Activated naive CD4-positive, alpha-beta T cell treated with anti-CD3 and anti-CD28 coated beads for 36 hours (primary cell): ENCODE measurements at regions of chr9 and their contacts with region 1.

Region 1: GRCh38 chr9:72338631-72339030 is 26.4 kb downstream of the ZFAND5 start:
- DNase-seq: no peak
- H3K4me3 Mint-ChIP-seq: no peak overlapping the region
- H3K27ac Mint-ChIP-seq: no peak overlapping the region
- H3K4me1 Mint-ChIP-seq: peaks cover 2% of the 10 kb centered on the region
- H3K27me3 Mint-ChIP-seq: no peaks in the 10 kb centered on the region

Region 2: DNA sequence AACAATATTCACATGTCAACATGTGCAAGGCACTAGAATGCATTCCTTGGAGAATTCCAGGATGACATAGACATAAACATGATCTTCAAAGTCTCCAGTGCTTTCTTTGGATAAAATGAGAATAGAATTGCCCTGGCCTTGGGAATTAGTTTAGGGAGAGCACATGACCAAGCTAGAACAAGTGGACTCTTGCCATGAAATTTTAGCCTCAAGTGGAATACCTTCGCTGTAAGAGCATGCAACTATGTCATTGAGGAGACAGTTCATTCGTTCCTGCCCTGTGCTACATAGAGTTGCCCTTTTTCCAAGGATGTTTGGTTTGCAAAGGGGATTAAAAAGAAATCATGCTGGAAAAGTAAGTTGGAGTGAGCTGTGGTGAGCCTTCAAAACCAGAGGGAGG is 16.4 kb before region 1 on chr9:
- CTCF ChIA-PET with region 1: no interaction called
- intact Hi-C with region 1: loop called (anchors 2 kb)
- DNase-seq: no peak
- H3K4me3 Mint-ChIP-seq: no peak overlapping the region
- H3K27ac Mint-ChIP-seq: no peak overlapping the region
- H3K4me1 Mint-ChIP-seq: no peaks in the 10 kb centered on the region
- H3K27me3 Mint-ChIP-seq: no peaks in the 10 kb centered on the region

Region 3: DNA sequence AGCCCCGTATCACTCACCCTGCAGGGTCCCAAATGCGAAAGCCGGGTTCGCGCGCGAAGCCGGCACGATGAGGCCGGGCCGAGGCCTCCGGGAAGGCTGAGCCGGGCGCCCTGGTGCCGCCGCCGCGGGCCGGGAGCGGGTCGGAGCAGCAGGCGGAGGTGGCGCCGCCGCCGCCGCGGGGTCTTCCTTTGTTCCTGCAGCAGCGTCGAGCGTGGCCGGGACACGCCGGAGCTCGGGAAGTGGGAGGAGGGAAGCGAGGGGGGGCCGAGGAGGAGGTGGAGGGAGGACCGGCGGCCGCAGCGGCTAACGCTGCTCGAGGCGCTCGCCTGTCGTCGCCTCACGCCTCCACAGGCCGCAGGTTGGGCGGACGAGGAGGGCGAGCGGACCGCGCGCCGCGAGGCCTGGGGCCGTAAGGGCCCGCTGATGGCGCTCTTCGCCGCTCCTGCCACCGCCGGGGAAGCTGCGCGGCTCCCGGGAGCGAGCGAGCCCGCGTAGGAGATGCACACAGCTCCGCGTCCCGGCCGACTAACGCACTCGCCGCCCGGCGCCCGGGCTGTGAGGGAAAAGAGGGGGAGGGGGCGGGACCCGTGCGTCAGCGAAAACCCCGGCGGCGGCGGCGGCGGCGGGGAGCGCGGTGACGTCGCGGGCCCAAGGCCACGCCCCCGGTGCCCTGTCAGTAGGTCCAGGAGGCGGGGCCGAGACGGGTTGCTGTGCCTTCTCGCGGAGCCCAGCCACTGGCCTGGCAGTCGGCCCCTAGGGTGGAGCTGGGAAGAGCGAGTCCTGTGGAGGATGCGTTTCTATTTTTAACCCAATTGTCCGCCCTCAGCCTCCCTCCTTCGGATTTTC is 26.3 kb after region 1 on chr9 and contains the start of gene ZFAND5:
- CTCF ChIA-PET with region 1: no interaction called
- intact Hi-C with region 1: no loop called
- DNase-seq: peak; percentile 94
- H3K4me3 Mint-ChIP-seq: peak within 1 kb of the TSS; percentile 82
- H3K27ac Mint-ChIP-seq: peak within 1 kb of the TSS; percentile 95
- H3K4me1 Mint-ChIP-seq: peaks cover 31% of the 10 kb centered on the region
- H3K27me3 Mint-ChIP-seq: no peaks in the 10 kb centered on the region
- total RNA-seq, gene ZFAND5: 71.9 to 73.2 TPM